IMR-90 (cell line): ENCODE measurements at regions of chr3 and their contacts with region 1.

Region 1: GRCh38 chr3:99982650-99983049 is 131.7 kb downstream of the FILIP1L start:
- DNase-seq: no peak
- ATAC-seq: no peak
- H3K4me3 ChIP-seq: no peak overlapping the region
- H3K27ac ChIP-seq: no peak overlapping the region
- H3K4me1 ChIP-seq: 0 out of 2 replicates have a peak, but pooled peaks cover 2% of the 10 kb centered on the region
- H3K27me3 ChIP-seq: no peaks in the 10 kb centered on the region
- CTCF ChIP-seq: no peak
- POLR2A ChIP-seq: no peak
- RAD21 ChIP-seq: no peak

Region 2: DNA sequence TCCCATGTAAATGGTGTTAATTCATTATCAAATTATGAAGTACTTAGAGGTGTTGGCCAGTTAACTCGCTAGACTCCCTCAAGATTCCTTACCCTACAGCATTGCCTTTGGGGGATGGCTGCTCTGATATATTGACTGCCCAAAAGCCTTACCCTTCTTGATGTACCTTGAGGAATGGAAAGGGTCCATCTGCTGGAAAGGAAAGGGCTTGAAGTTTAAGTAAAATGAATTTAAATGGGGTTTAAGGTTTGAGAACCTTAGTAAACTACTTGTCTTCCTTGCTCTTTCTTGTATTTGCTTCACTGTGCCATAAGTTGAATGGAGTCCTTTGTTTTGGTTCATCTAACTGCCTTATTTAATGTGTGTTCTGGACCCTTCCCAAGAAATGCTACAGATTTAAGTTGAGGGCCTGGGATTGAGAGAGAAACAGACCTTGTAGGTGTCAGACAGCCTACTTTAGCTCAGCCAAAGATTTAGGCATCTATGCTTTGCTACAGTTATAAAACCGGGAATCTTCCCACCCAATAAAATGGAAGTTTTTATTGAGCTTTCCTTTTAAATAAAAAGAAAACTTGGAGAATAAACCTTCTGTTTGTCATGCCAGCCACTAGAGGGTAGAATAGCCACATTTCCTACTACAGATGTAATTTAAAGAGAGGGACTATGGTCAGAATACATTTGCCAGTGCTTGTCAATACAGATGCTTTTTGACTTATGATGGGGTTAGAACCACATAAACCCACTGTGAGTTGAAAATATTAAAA is 139.6 kb before region 1 on chr3:
- CTCF ChIA-PET with region 1: interaction called, 11 read pairs
- POLR2A ChIA-PET with region 1: no interaction called
- dilution Hi-C with region 1: no loop called
- in situ Hi-C with region 1: no loop called
- intact Hi-C with region 1: no loop called
- DNase-seq: peak; percentile 73
- ATAC-seq: peak; percentile 82
- H3K4me3 ChIP-seq: no peak overlapping the region
- H3K27ac ChIP-seq: no peak overlapping the region
- H3K4me1 ChIP-seq: peaks cover 15% of the 10 kb centered on the region
- H3K27me3 ChIP-seq: no peaks in the 10 kb centered on the region
- CTCF ChIP-seq: peak; percentile 83
- POLR2A ChIP-seq: no peak
- RAD21 ChIP-seq: peak; percentile 80

Region 3: GRCh38 chr3:100060685-100061484 is 78.2 kb after region 1 on chr3:
- CTCF ChIA-PET with region 1: no interaction called
- POLR2A ChIA-PET with region 1: no interaction called
- dilution Hi-C with region 1: no loop called
- in situ Hi-C with region 1: no loop called
- intact Hi-C with region 1: no loop called
- DNase-seq: no peak
- ATAC-seq: no peak
- H3K4me3 ChIP-seq: no peak overlapping the region
- H3K27ac ChIP-seq: no peak overlapping the region
- H3K4me1 ChIP-seq: peaks cover 15% of the 10 kb centered on the region
- H3K27me3 ChIP-seq: no peaks in the 10 kb centered on the region
- CTCF ChIP-seq: no peak
- POLR2A ChIP-seq: no peak
- RAD21 ChIP-seq: no peak